HEK293 (cell line): ENCODE measurements at regions of chr2 and their contacts with region 1.

Region 1: DNA sequence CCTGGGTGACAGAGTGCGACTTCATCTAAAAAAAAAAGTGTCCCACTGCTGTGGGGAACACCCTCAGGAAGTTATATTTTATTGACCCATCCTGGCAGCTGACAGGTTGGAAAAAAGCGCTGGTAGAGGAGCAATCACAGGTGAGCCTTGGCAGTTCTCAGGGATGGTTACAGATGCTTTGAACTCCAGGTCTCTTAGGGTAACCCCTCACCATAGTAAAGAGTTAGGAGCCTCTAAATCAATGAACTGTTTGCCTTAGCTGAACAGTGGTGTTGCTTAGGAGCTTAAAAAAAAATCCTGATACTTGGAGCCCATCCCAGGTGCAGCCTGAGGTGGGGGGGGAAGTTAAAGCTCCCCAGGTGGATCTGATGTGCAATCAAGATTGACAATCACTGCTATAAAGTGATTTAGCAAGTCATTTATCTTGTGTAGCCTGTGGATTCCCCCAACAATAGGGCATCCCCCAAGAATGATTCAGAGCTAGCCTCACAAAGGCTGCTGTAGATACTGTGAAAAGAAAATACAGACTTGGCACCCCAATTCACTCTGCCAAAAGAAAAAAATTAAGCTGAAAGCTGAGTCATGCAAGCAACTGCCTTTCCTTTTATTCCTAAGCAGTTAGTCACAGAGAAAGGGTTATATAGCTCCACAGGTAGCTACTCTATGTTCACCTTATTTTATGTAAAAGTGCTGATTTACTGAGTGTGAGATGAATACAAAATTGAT is 14.8 kb downstream of the SLC16A14 start:
- H3K4me3 ChIP-seq: no peak overlapping the region
- H3K27ac ChIP-seq: no peak overlapping the region
- H3K4me1 ChIP-seq: no peaks in the 10 kb centered on the region
- CTCF ChIP-seq: no peak

Region 2: DNA sequence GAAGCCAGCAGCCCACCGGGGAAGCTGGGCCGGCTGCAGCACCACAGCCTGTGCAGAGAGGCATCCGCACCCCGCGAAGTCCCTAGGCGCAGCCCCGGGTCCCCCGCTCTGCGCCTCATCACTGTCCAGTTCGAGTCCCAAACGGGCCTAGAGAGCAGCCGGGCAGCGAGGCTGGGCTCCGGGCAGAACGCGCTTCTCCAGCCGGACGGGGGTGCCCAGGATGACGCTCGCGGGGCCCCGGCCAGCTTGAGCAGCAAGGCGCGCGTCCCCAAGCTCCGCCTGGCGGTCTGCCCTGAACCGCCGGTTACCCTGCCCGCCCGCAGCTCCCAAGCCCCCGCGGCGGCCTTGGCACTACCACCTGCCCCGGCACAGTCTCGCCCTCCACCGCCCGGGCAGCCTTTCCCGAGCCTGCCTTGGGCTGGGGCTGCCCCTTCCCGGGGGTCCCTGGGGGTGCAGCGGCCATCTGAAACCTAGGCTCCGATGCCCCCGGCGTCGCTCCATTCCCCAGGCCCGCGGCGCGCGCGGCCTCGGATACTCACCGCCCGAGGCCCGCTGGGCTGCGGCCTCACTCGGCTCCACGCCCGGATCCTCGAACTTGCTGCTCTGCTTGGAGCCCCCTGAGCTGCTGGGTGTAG is 14.2 kb after region 1 on chr2:
- CTCF ChIA-PET with region 1: interaction called, 15 read pairs
- POLR2A ChIA-PET with region 1: no interaction called
- H3K4me3 ChIP-seq: peak overlapping the region; percentile 76
- H3K27ac ChIP-seq: peak overlapping the region; percentile 76; the same call in 1 of the 2 replicates
- H3K4me1 ChIP-seq: no peaks in the 10 kb centered on the region
- CTCF ChIP-seq: peak; percentile 87